Calu3 (cell line): ENCODE measurements at regions of chr11 and their contacts with region 1.

Region 1: GRCh38 chr11:1882519-1883238 is 9.0 kb downstream of the PRR33 start:
- DNase-seq: peak; percentile 88
- H3K4me3 Mint-ChIP-seq: no peak overlapping the region
- H3K27ac Mint-ChIP-seq: no peak overlapping the region
- H3K4me1 Mint-ChIP-seq: no peaks in the 10 kb centered on the region
- H3K27me3 Mint-ChIP-seq: peaks cover 1% of the 10 kb centered on the region
- CTCF ChIP-seq: peak; percentile 83

Region 2: DNA sequence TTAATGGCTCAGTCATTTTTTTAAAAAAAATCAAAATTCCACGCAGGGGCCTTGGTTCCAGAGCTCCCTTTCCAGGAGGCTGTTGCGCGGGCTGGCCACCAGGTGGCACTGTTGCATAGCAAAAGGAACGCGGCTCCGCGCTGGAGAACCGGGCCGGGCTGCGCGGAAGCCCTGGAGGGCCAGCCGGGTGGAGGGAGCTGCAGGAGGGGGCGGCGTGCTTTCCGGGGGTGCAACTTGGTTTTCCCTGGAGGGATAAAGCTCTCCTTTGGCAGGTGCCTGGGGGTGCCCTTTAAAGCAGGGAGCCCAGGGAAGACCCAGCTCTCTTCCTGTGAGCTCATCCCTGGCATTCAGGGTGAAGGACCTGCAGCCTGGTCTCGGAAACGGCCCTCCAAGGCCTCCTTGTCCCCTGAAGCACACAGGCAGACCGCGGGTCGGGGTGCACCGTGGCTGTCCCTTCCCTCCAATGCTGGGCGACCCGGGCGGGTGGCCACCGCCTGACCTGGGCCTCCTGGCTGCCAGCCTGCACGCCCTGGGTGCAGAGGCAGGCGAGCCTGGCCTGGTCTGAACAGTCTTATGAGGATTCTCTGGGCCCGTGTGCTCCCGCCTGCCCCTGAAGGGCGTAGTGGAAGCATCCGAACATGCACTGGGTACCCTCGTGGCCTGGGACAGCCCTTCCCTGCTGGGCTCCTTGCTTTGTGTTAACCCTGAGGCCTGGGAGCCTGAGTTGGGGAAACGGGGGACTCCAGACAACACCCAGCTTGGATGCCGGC is 229.7 kb before region 1 on chr11:
- CTCF ChIA-PET with region 1: interaction called, 10 read pairs
- intact Hi-C with region 1: no loop called
- DNase-seq: peak; percentile 83
- H3K4me3 Mint-ChIP-seq: no peak overlapping the region
- H3K27ac Mint-ChIP-seq: no peak overlapping the region
- H3K4me1 Mint-ChIP-seq: no peaks in the 10 kb centered on the region
- H3K27me3 Mint-ChIP-seq: peaks cover 75% of the 10 kb centered on the region
- CTCF ChIP-seq: peak; percentile 98

Region 3: GRCh38 chr11:1694064-1694845 is 188.4 kb before region 1 on chr11:
- CTCF ChIA-PET with region 1: interaction called, 20 read pairs
- intact Hi-C with region 1: no loop called
- DNase-seq: peak; percentile 94
- H3K4me3 Mint-ChIP-seq: peak overlapping the region; percentile 68
- H3K27ac Mint-ChIP-seq: no peak overlapping the region
- H3K4me1 Mint-ChIP-seq: peaks cover 16% of the 10 kb centered on the region
- H3K27me3 Mint-ChIP-seq: peaks cover 36% of the 10 kb centered on the region
- CTCF ChIP-seq: peak; percentile 92

Region 4: GRCh38 chr11:2002807-2003206 is 120.1 kb after region 1 on chr11:
- CTCF ChIA-PET with region 1: interaction called, 19 read pairs
- intact Hi-C with region 1: no loop called
- DNase-seq: no peak
- H3K4me3 Mint-ChIP-seq: no peak overlapping the region
- H3K27ac Mint-ChIP-seq: no peak overlapping the region
- H3K4me1 Mint-ChIP-seq: no peaks in the 10 kb centered on the region
- H3K27me3 Mint-ChIP-seq: no peaks in the 10 kb centered on the region
- CTCF ChIP-seq: no peak